ENCODE measurements at regions of chr18 and their contacts with region 1.

Region 1: GRCh38 chr18:11518788-11519685 is 90.4 kb upstream of the SLC35G4 start:
- DNase-seq: peak; percentile 87
- ATAC-seq: peak; percentile 98
- H3K4me3 Mint-ChIP-seq: peak overlapping the region; percentile 58
- H3K27ac Mint-ChIP-seq: no peak overlapping the region
- H3K4me1 Mint-ChIP-seq: no peaks in the 10 kb centered on the region
- H3K27me3 Mint-ChIP-seq: peaks cover 15% of the 10 kb centered on the region
- CTCF ChIP-seq: peak; percentile 61

Region 2: GRCh38 chr18:11310476-11311086 is 208.5 kb before region 1 on chr18:
- CTCF ChIA-PET with region 1: interaction called, 40 read pairs
- POLR2A ChIA-PET with region 1: no interaction called
- DNase-seq: peak; percentile 80
- ATAC-seq: peak; percentile 90
- H3K4me3 Mint-ChIP-seq: no peak overlapping the region
- H3K27ac Mint-ChIP-seq: no peak overlapping the region
- H3K4me1 Mint-ChIP-seq: no peaks in the 10 kb centered on the region
- H3K27me3 Mint-ChIP-seq: no peaks in the 10 kb centered on the region
- CTCF ChIP-seq: peak; percentile 74

Region 3: GRCh38 chr18:11504962-11505361 is 14.1 kb before region 1 on chr18:
- CTCF ChIA-PET with region 1: interaction called, 12 read pairs
- POLR2A ChIA-PET with region 1: no interaction called
- DNase-seq: no peak
- ATAC-seq: no peak
- H3K4me3 Mint-ChIP-seq: no peak overlapping the region
- H3K27ac Mint-ChIP-seq: no peak overlapping the region
- H3K4me1 Mint-ChIP-seq: no peaks in the 10 kb centered on the region
- H3K27me3 Mint-ChIP-seq: no peaks in the 10 kb centered on the region
- CTCF ChIP-seq: no peak

Region 4: GRCh38 chr18:11533942-11534496 is 15.0 kb after region 1 on chr18:
- CTCF ChIA-PET with region 1: interaction called, 13 read pairs
- POLR2A ChIA-PET with region 1: no interaction called
- DNase-seq: no peak
- ATAC-seq: no peak; the same call in 1 of the 2 replicates
- H3K4me3 Mint-ChIP-seq: no peak overlapping the region
- H3K27ac Mint-ChIP-seq: no peak overlapping the region
- H3K4me1 Mint-ChIP-seq: no peaks in the 10 kb centered on the region
- H3K27me3 Mint-ChIP-seq: no peaks in the 10 kb centered on the region
- CTCF ChIP-seq: no peak

Region 5: GRCh38 chr18:11553098-11553940 is 34.3 kb after region 1 on chr18:
- CTCF ChIA-PET with region 1: interaction called, 31 read pairs
- POLR2A ChIA-PET with region 1: interaction called, 5 read pairs
- DNase-seq: peak; percentile 57
- ATAC-seq: peak; percentile 95
- H3K4me3 Mint-ChIP-seq: no peak overlapping the region
- H3K27ac Mint-ChIP-seq: no peak overlapping the region
- H3K4me1 Mint-ChIP-seq: no peaks in the 10 kb centered on the region
- H3K27me3 Mint-ChIP-seq: no peaks in the 10 kb centered on the region
- CTCF ChIP-seq: peak; percentile 85

Region 6: DNA sequence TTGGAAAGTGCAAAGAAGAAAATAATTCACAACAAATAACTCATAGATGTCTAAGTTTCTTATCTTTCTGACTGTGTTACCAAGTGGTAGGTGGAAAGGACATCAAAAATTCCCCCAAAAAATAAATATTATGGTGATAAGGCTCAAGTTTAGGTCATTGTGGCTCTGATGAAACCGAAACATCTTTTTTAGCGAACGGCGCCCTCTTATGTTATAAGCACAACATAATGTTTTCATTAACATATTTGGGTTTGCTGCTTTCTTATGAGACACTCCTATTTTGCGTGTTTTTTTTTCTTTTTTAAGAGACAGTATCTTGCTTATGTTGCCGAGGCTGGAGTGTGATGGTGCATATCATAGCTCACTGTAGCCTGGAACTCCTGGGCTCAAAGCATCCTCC is 51.7 kb after region 1 on chr18:
- CTCF ChIA-PET with region 1: interaction called, 11 read pairs
- POLR2A ChIA-PET with region 1: no interaction called
- DNase-seq: no peak
- ATAC-seq: no peak
- H3K4me3 Mint-ChIP-seq: no peak overlapping the region
- H3K27ac Mint-ChIP-seq: no peak overlapping the region
- H3K4me1 Mint-ChIP-seq: peaks cover 5% of the 10 kb centered on the region
- H3K27me3 Mint-ChIP-seq: peaks cover 2% of the 10 kb centered on the region; the same call in 1 of the 2 replicates
- CTCF ChIP-seq: no peak